Dorsolateral prefrontal cortex (tissue), 120 donors: ENCODE measurements at regions of chr2 and their contacts with region 1.

Region 1: GRCh38 chr2:15636972-15637785 is 45.5 kb downstream of the DDX1 start:
- DNase-seq: peak; percentile 71 to 90 (median 76)
- H3K4me3 ChIP-seq: no peak overlapping the region
- H3K27ac ChIP-seq: peak overlapping the region in 29 of 59 donors; percentile 1 to 67 (median 40)
- H3K27me3 ChIP-seq: no peaks in the 10 kb centered on the region
- CTCF ChIP-seq: peak; percentile 73 to 99 (median 97)

Region 2: DNA sequence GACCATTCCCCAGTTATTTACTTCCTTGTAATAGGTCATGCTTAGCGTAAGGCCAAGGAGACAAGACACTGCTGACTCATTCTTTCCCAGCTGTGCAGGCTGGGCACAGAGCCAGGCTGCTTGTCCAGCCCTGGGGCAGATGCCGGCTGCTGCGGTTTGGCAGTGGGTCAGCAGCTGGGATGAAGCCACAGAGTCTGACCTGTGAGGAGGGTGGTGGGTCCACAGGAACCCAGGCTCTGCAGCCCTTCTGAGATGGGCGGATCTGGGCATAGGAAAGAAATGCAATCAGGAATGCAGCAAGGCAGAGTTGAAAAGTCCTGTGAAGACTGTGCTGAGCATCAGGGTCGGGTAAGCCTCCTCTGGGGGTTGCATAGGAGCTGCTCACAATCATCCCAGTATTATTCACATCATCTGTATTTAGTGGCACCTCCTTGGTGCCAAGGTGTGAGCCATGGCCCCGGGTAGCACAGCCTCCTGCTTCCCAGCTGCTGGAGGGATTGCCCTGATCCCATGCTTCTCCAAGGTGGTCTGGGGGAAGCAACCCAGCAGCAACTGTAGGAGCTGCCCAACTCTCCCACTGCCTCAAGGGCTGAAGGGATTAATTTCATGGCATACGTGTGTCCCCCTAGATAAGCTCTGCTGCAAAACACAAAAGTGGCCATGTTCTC is 93.5 kb after region 1 on chr2:
- intact Hi-C with region 1: loop called in 1 of 2 experiments (anchors 5 kb)
- DNase-seq: peak; percentile 24 to 95 (median 92)
- H3K4me3 ChIP-seq: no peak overlapping the region
- H3K27ac ChIP-seq: peak overlapping the region in 15 of 59 donors; percentile 2 to 68 (median 45)
- H3K27me3 ChIP-seq: no peaks in the 10 kb centered on the region
- CTCF ChIP-seq: peak in 4 of 56 donors; percentile 13 to 27 (median 24)

Region 3: GRCh38 chr2:16069933-16070647 is 432.9 kb after region 1 on chr2:
- intact Hi-C with region 1: loop called in 1 of 2 experiments (anchors 10 kb)
- DNase-seq: peak; percentile 23 to 96 (median 89)
- H3K4me3 ChIP-seq: peak overlapping the region in 32 of 59 donors; percentile 0 to 55 (median 30)
- H3K27ac ChIP-seq: peak overlapping the region; percentile 83 to 100 (median 96)
- H3K27me3 ChIP-seq: no peaks in the 10 kb centered on the region
- CTCF ChIP-seq: peak in 9 of 56 donors; percentile 2 to 30 (median 18)

Region 4: DNA sequence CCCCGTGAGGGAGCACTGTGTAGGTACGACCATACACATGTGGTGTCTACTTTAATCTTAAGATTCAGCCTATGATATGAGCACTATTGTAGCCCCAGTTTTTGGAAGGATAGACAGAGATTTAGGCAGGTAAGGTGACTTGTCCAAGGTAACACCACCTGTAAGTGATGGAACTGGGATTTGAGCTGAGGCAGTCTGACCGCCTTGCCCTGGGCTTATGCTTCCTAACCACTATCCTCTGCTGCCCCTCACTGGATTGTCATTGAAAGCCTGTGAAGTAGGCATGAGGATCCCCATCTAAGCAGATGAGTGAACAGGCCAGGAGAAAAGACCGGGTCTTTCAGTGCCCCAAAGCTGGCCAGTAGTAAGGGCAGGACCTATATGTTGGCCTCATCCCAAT is 684.7 kb after region 1 on chr2:
- intact Hi-C with region 1: loop called in 1 of 2 experiments (anchors 2 kb)
- DNase-seq: peak in 3 of 10 donors; percentile 14 to 51 (median 47)
- H3K4me3 ChIP-seq: no peak overlapping the region
- H3K27ac ChIP-seq: peak overlapping the region in 4 of 59 donors; percentile 45 to 79 (median 74)
- H3K27me3 ChIP-seq: no peaks in the 10 kb centered on the region
- CTCF ChIP-seq: peak in 47 of 56 donors; percentile 12 to 69 (median 45)

Region 5: DNA sequence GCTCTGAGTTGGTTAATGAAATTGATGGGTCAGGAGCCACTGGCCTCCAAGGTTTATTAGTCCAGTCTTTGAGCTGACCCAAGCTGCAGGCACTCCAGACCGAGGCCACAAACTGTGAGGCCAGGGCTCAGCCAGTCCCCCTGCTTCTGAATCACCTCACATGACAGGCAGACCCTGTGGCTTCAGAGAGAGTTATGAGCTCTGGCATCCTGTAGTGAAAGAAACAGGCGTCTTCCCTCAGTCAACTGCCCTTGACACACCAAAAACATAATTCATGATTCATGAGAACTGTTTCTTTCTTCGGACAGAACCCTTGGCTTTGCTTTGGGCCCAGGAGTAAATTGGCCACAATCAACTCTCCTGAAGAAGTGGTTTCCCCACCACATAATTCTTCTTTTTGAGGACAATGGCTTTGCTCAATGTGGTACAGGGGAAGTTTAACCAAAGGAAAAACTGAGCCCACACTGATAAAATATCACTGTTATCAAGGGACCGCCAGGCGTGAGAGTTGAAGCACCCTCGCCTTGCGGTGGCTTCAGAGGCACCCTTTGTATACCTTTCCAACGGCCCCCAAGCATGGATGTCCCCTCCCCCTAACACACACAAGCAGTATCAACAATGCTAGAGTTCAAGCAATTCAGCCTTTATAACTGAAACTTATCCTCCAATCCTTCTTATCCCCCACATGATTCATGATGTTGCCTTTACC is 801.6 kb after region 1 on chr2:
- intact Hi-C with region 1: no loop called
- DNase-seq: no peak
- H3K4me3 ChIP-seq: no peak overlapping the region
- H3K27ac ChIP-seq: no peak overlapping the region
- H3K27me3 ChIP-seq: peaks cover 0 to 9% (median 0%) of the 10 kb centered on the region in 45 donors
- CTCF ChIP-seq: no peak

Region 6: GRCh38 chr2:16507655-16508489 is 870.7 kb after region 1 on chr2:
- intact Hi-C with region 1: loop called (anchors 2 to 5 kb)
- DNase-seq: peak in 8 of 10 donors; percentile 20 to 79 (median 50)
- H3K4me3 ChIP-seq: peak overlapping the region; percentile 44 to 76 (median 65)
- H3K27ac ChIP-seq: peak overlapping the region in 1 of 59 donors; percentile 34
- H3K27me3 ChIP-seq: peaks cover 0 to 7% (median 0%) of the 10 kb centered on the region in 45 donors
- CTCF ChIP-seq: peak in 55 of 56 donors; percentile 47 to 92 (median 75)

Region 7: GRCh38 chr2:16756831-16757644 is 1119.9 kb after region 1 on chr2:
- intact Hi-C with region 1: loop called in 1 of 2 experiments (anchors 10 kb)
- DNase-seq: peak; percentile 74 to 91 (median 86)
- H3K4me3 ChIP-seq: peak overlapping the region in 1 of 59 donors; percentile 37
- H3K27ac ChIP-seq: peak overlapping the region in 34 of 59 donors; percentile 13 to 77 (median 56)
- H3K27me3 ChIP-seq: no peaks in the 10 kb centered on the region
- CTCF ChIP-seq: peak; percentile 88 to 98 (median 94)